ENCODE measurements at regions of chr5 and their contacts with region 1.

Region 1: GRCh38 chr5:93582677-93583438 is at the start of gene NR2F1:
- DNase-seq: peak; percentile 99
- ATAC-seq: peak; percentile 45
- H3K4me3 ChIP-seq: peak within 1 kb of the TSS; percentile 99
- H3K27ac ChIP-seq: peak within 1 kb of the TSS; percentile 97
- H3K4me1 ChIP-seq: no peaks in the 10 kb centered on the region
- H3K27me3 ChIP-seq: no peaks in the 10 kb centered on the region
- CTCF ChIP-seq: 0 out of 2 replicates have a peak, but pooled peaks have one; percentile 23
- POLR2A ChIP-seq: peak; percentile 69
- RAD21 ChIP-seq: no peak
- total RNA-seq, gene NR2F1: 18.1 and 19.0 TPM in 2 replicates

Region 2: DNA sequence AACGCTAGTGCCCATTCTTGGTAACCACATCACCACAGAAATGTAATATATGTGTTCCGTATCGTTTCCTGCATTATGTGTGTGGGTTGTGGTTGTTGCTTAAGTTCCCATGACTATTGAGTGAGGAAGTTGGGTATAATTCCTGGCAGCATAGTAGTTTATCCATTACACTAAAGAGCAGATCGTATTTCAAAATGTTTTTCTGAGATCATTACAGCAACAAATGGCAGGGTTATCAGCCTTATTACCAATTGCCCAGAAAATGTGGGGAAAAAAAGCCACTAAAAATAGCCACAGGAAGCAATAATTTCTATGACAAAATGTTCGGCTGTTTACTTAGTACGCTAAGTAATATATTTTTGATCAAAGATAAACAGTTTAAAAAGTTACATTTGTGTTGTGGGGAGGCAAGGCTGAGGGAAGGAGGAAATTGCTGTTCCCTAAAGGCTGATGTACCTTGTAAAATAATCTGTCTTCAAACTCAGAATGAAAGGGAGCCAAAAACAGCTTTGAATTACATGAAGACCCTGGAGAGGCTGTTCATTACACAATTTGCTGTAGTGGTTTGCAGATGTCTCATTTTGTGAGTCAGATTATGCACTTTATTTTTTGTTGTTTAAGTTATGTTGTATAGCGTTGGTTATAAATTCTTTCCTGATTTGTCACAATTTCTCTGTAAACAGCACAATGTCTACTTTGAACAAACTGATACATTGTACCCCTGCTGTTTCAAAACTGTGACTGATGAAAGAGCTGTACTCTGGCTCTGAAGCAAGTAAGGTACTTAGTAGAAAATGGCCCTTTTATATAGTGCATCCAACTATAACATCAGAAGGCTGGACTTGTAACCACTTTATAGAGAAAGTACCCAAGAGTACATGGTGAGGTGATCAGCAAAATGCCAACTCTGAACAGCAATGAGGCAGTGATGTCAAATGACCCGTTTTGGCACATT is 1030.4 kb before region 1 on chr5:
- CTCF ChIA-PET with region 1: no interaction called
- POLR2A ChIA-PET with region 1: no interaction called
- dilution Hi-C with region 1: no loop called
- in situ Hi-C with region 1: loop called (anchors 10 kb)
- intact Hi-C with region 1: loop called (anchors 5 kb)
- DNase-seq: peak; percentile 99
- ATAC-seq: peak; percentile 83
- H3K4me3 ChIP-seq: no peak overlapping the region; the same call in 1 of the 2 replicates
- H3K27ac ChIP-seq: peak overlapping the region; percentile 53
- H3K4me1 ChIP-seq: no peaks in the 10 kb centered on the region; the same call in 1 of the 2 replicates
- H3K27me3 ChIP-seq: no peaks in the 10 kb centered on the region
- CTCF ChIP-seq: no peak
- POLR2A ChIP-seq: no peak
- RAD21 ChIP-seq: peak; percentile 24; the same call in 1 of the 2 replicates

Region 3: DNA sequence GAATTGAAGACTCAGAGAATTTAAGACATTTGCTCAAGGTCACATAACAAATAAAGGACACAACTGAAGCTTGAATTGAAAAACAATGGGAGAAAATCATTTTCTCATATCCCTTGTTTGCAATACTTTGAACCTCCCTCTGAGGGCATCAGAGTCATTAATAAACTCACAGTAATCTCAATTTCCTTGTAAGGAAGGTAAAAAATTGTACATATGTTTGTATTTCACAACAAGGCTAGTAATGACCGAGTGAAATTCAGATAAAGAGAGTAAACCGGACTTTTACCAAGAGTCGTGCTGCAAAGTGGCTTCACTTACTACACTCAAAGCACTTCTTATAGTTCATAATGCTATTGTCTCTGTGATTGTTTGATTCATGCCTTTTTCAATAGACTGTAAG is 666.8 kb before region 1 on chr5:
- CTCF ChIA-PET with region 1: no interaction called
- POLR2A ChIA-PET with region 1: no interaction called
- dilution Hi-C with region 1: no loop called
- in situ Hi-C with region 1: loop called (anchors 25 kb)
- intact Hi-C with region 1: loop called (anchors 1 kb)
- DNase-seq: peak; percentile 44
- ATAC-seq: peak; percentile 49
- H3K4me3 ChIP-seq: no peak overlapping the region
- H3K27ac ChIP-seq: no peak overlapping the region
- H3K4me1 ChIP-seq: peaks cover 2% of the 10 kb centered on the region; the same call in 1 of the 2 replicates
- H3K27me3 ChIP-seq: no peaks in the 10 kb centered on the region
- CTCF ChIP-seq: peak; percentile 44
- POLR2A ChIP-seq: no peak
- RAD21 ChIP-seq: peak; percentile 43

Region 4: GRCh38 chr5:93189707-93190120 is 393.1 kb before region 1 on chr5:
- CTCF ChIA-PET with region 1: no interaction called
- POLR2A ChIA-PET with region 1: no interaction called
- dilution Hi-C with region 1: no loop called
- in situ Hi-C with region 1: no loop called
- intact Hi-C with region 1: loop called (anchors 5 kb)
- DNase-seq: peak; percentile 97
- ATAC-seq: peak; percentile 54
- H3K4me3 ChIP-seq: no peak overlapping the region
- H3K27ac ChIP-seq: no peak overlapping the region
- H3K4me1 ChIP-seq: peaks cover 7% of the 10 kb centered on the region
- H3K27me3 ChIP-seq: no peaks in the 10 kb centered on the region
- CTCF ChIP-seq: no peak
- POLR2A ChIP-seq: no peak
- RAD21 ChIP-seq: peak; percentile 9; the same call in 1 of the 2 replicates

Region 5: GRCh38 chr5:93452255-93452654 is 130.6 kb before region 1 on chr5:
- CTCF ChIA-PET with region 1: no interaction called
- POLR2A ChIA-PET with region 1: no interaction called
- dilution Hi-C with region 1: no loop called
- in situ Hi-C with region 1: no loop called
- intact Hi-C with region 1: no loop called
- DNase-seq: no peak
- ATAC-seq: peak; percentile 51
- H3K4me3 ChIP-seq: no peak overlapping the region
- H3K27ac ChIP-seq: no peak overlapping the region
- H3K4me1 ChIP-seq: no peaks in the 10 kb centered on the region
- H3K27me3 ChIP-seq: no peaks in the 10 kb centered on the region
- CTCF ChIP-seq: no peak
- POLR2A ChIP-seq: no peak
- RAD21 ChIP-seq: no peak

Region 6: DNA sequence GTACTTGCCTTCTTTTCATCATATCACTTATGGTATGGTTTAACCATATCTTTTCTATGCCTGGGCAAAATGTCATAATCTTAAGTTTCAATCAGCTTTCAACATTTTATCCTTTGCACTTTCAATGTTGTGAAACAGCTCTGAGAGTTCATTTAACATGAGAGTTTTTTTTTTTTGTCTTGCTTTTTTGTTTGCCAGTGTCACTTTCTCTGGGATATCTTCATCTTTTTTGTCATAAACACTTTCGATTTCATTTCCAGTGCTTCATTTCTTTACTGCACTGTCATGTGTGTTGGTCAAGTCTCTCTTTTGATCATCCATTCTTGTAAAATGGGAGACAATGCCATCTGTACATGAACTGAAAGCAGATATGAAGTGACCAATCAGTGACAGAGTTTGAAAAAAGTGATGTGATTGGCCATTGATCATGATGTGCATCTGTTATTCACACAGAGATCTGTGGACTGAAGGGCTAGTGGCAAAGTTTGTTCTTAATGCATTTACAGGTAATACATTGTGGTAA is 166.1 kb after region 1 on chr5:
- CTCF ChIA-PET with region 1: no interaction called
- POLR2A ChIA-PET with region 1: no interaction called
- dilution Hi-C with region 1: no loop called
- in situ Hi-C with region 1: no loop called
- intact Hi-C with region 1: no loop called
- DNase-seq: no peak
- ATAC-seq: no peak
- H3K4me3 ChIP-seq: no peak overlapping the region
- H3K27ac ChIP-seq: no peak overlapping the region
- H3K4me1 ChIP-seq: no peaks in the 10 kb centered on the region
- H3K27me3 ChIP-seq: no peaks in the 10 kb centered on the region
- CTCF ChIP-seq: no peak
- POLR2A ChIP-seq: no peak
- RAD21 ChIP-seq: no peak

Region 7: GRCh38 chr5:93800988-93801811 is 218.3 kb after region 1 on chr5:
- CTCF ChIA-PET with region 1: interaction called, 10 read pairs
- POLR2A ChIA-PET with region 1: no interaction called
- dilution Hi-C with region 1: no loop called
- in situ Hi-C with region 1: no loop called
- intact Hi-C with region 1: loop called (anchors 2 kb)
- DNase-seq: peak; percentile 64
- ATAC-seq: peak; percentile 73
- H3K4me3 ChIP-seq: no peak overlapping the region
- H3K27ac ChIP-seq: no peak overlapping the region
- H3K4me1 ChIP-seq: no peaks in the 10 kb centered on the region
- H3K27me3 ChIP-seq: no peaks in the 10 kb centered on the region
- CTCF ChIP-seq: peak; percentile 75
- POLR2A ChIP-seq: no peak
- RAD21 ChIP-seq: peak; percentile 85

Region 8: GRCh38 chr5:94159144-94159543 is 576.3 kb after region 1 on chr5:
- CTCF ChIA-PET with region 1: no interaction called
- POLR2A ChIA-PET with region 1: no interaction called
- dilution Hi-C with region 1: no loop called
- in situ Hi-C with region 1: no loop called
- intact Hi-C with region 1: loop called (anchors 5 kb)
- DNase-seq: no peak
- ATAC-seq: no peak
- H3K4me3 ChIP-seq: no peak overlapping the region
- H3K27ac ChIP-seq: no peak overlapping the region
- H3K4me1 ChIP-seq: peaks cover 2% of the 10 kb centered on the region
- H3K27me3 ChIP-seq: no peaks in the 10 kb centered on the region
- CTCF ChIP-seq: peak; percentile 29
- POLR2A ChIP-seq: no peak
- RAD21 ChIP-seq: peak; percentile 42; the same call in 1 of the 2 replicates

Measured in IMR-90 (cell line).